ENCODE measurements at regions of chrX and their contacts with region 1.

Region 1: GRCh38 chrX:31036895-31037294 is 34.9 kb downstream of the FTHL17 start:
- DNase-seq: peak; percentile 67
- H3K4me3 Mint-ChIP-seq: no peak overlapping the region
- H3K27ac Mint-ChIP-seq: no peak overlapping the region
- H3K4me1 Mint-ChIP-seq: no peaks in the 10 kb centered on the region
- H3K27me3 Mint-ChIP-seq: peaks cover 11% of the 10 kb centered on the region
- CTCF ChIP-seq: peak; percentile 64

Region 2: GRCh38 chrX:30735839-30736238 is 301.1 kb before region 1 on chrX:
- CTCF ChIA-PET with region 1: interaction called, 11 read pairs
- POLR2A ChIA-PET with region 1: no interaction called
- intact Hi-C with region 1: no loop called
- DNase-seq: peak; percentile 68
- H3K4me3 Mint-ChIP-seq: no peak overlapping the region
- H3K27ac Mint-ChIP-seq: no peak overlapping the region
- H3K4me1 Mint-ChIP-seq: peaks cover 6% of the 10 kb centered on the region
- H3K27me3 Mint-ChIP-seq: no peaks in the 10 kb centered on the region
- CTCF ChIP-seq: peak; percentile 74

Region 3: GRCh38 chrX:30831082-30831481 is 205.8 kb before region 1 on chrX:
- CTCF ChIA-PET with region 1: no interaction called
- POLR2A ChIA-PET with region 1: no interaction called
- intact Hi-C with region 1: no loop called
- DNase-seq: no peak
- H3K4me3 Mint-ChIP-seq: no peak overlapping the region
- H3K27ac Mint-ChIP-seq: no peak overlapping the region
- H3K4me1 Mint-ChIP-seq: no peaks in the 10 kb centered on the region
- H3K27me3 Mint-ChIP-seq: peaks cover 12% of the 10 kb centered on the region
- CTCF ChIP-seq: no peak

Region 4: GRCh38 chrX:30971774-30972603 is 64.9 kb before region 1 on chrX:
- CTCF ChIA-PET with region 1: interaction called, 11 read pairs
- POLR2A ChIA-PET with region 1: interaction called, 5 read pairs
- intact Hi-C with region 1: no loop called
- DNase-seq: peak; percentile 46
- H3K4me3 Mint-ChIP-seq: peak overlapping the region; percentile 59
- H3K27ac Mint-ChIP-seq: no peak overlapping the region
- H3K4me1 Mint-ChIP-seq: peaks cover 6% of the 10 kb centered on the region
- H3K27me3 Mint-ChIP-seq: peaks cover 17% of the 10 kb centered on the region
- CTCF ChIP-seq: peak; percentile 46

Region 5: DNA sequence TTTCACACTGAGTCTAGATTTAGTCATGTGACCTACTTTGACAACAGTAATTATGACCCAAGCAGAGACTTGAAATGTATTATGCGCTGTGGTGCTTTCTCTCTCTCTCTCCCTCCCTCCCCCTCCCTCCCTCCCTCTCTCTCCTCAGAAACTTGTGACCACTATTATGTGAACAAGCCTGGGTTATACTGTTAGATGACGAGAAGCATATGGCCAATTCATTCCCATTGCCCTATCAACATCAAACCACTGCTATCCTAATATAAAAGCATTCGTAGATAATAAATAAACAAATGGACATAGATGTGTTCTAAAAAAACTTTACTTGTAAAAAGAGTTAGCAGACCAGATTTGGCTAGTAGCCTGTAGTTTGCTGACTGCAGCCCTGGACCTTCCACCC is 16.7 kb after region 1 on chrX:
- CTCF ChIA-PET with region 1: interaction called, 42 read pairs
- POLR2A ChIA-PET with region 1: no interaction called
- intact Hi-C with region 1: no loop called
- DNase-seq: no peak
- H3K4me3 Mint-ChIP-seq: no peak overlapping the region
- H3K27ac Mint-ChIP-seq: no peak overlapping the region
- H3K4me1 Mint-ChIP-seq: no peaks in the 10 kb centered on the region
- H3K27me3 Mint-ChIP-seq: peaks cover 24% of the 10 kb centered on the region
- CTCF ChIP-seq: no peak

Region 6: GRCh38 chrX:31293409-31293808 is 256.5 kb after region 1 on chrX:
- CTCF ChIA-PET with region 1: interaction called, 45 read pairs
- POLR2A ChIA-PET with region 1: no interaction called
- intact Hi-C with region 1: loop called (anchors 1 kb)
- DNase-seq: peak; percentile 4
- H3K4me3 Mint-ChIP-seq: no peak overlapping the region
- H3K27ac Mint-ChIP-seq: no peak overlapping the region
- H3K4me1 Mint-ChIP-seq: no peaks in the 10 kb centered on the region
- H3K27me3 Mint-ChIP-seq: peaks cover under 1% of the 10 kb centered on the region
- CTCF ChIP-seq: peak; percentile 12

Region 7: GRCh38 chrX:31652650-31653049 is 615.8 kb after region 1 on chrX:
- CTCF ChIA-PET with region 1: interaction called, 164 read pairs
- POLR2A ChIA-PET with region 1: no interaction called
- intact Hi-C with region 1: no loop called
- DNase-seq: no peak
- H3K4me3 Mint-ChIP-seq: no peak overlapping the region
- H3K27ac Mint-ChIP-seq: no peak overlapping the region
- H3K4me1 Mint-ChIP-seq: no peaks in the 10 kb centered on the region
- H3K27me3 Mint-ChIP-seq: peaks cover 32% of the 10 kb centered on the region
- CTCF ChIP-seq: no peak

Region 8: GRCh38 chrX:31665454-31665853 is 628.6 kb after region 1 on chrX:
- CTCF ChIA-PET with region 1: interaction called, 164 read pairs
- POLR2A ChIA-PET with region 1: no interaction called
- intact Hi-C with region 1: no loop called
- DNase-seq: no peak
- H3K4me3 Mint-ChIP-seq: no peak overlapping the region
- H3K27ac Mint-ChIP-seq: no peak overlapping the region
- H3K4me1 Mint-ChIP-seq: no peaks in the 10 kb centered on the region
- H3K27me3 Mint-ChIP-seq: peaks cover 47% of the 10 kb centered on the region
- CTCF ChIP-seq: no peak

Measured in MCF 10A (cell line).